Heart right ventricle (tissue), 16 donors: ENCODE measurements at regions of chr15 and their contacts with region 1.

Region 1: GRCh38 chr15:29511663-29512062 is 242.0 kb upstream of the NSMCE3 start:
- DNase-seq: no peak
- ATAC-seq: no peak
- H3K4me3 ChIP-seq: no peak overlapping the region
- H3K27ac ChIP-seq: no peak overlapping the region
- H3K4me1 ChIP-seq: peaks cover 0 to 2% (median 0%) of the 10 kb centered on the region in 9 donors
- H3K27me3 ChIP-seq: no peaks in the 10 kb centered on the region
- CTCF ChIP-seq: no peak

Region 2: DNA sequence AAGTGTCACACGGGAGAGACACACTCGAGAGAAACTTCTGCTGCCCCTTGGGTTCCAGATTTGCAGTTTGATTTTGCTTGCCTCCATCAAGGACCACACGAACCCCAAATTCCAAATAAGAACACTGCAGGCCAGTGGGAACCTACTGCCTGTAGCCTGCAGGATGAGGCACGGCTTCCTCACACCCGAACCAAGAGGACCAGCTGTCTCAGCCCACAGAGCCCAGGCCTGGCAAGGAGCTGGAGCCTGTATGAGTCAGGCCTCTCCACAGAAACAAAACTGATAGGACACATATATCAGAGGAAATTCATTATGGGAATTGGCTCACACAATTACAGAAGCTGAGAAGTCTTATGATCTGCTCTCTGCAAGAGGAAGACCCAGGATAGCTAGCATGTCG is 53.9 kb before region 1 on chr15:
- intact Hi-C with region 1: loop called in 1 of 10 experiments (anchors 5 kb)
- DNase-seq: no peak
- ATAC-seq: no peak
- H3K4me3 ChIP-seq: no peak overlapping the region
- H3K27ac ChIP-seq: no peak overlapping the region
- H3K4me1 ChIP-seq: peaks cover 0 to 11% (median 0%) of the 10 kb centered on the region in 9 donors
- H3K27me3 ChIP-seq: no peaks in the 10 kb centered on the region
- CTCF ChIP-seq: no peak

Region 3: DNA sequence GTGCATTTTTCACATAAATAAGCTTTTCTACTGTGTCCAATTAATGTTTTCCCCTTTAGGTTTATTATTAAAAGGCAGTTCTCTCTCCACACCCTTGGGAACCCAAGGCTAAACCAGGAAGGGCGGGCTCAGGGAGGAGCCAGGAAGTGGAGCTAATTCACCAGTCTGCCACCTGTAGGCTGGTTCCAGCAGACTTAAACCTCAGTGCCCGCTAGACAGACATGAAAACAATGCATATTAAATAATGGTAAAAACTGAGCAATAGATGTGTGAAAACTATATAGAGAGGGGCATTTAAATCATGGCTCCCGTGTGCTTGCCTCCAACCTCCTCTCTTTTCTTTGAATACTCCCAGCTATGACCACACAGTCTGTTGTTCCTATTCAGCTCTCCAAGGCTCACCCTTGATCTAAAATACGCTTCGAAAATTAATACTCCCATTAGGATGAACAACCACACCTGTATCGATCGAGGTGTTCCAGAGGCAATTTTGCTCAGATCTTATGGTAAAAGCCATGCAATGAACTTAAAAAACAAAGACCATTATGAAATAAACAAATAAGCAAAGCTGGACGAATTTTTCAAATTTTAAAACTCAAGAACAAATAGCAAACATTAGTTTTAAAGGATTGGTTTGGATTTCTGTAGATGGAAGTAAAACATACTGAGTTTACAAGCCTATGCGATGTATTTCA is 57.3 kb after region 1 on chr15:
- intact Hi-C with region 1: no loop called
- DNase-seq: no peak
- ATAC-seq: peak in 1 of 8 donors; percentile 65
- H3K4me3 ChIP-seq: no peak overlapping the region
- H3K27ac ChIP-seq: no peak overlapping the region
- H3K4me1 ChIP-seq: peaks cover 0 to 29% (median 12%) of the 10 kb centered on the region in 9 donors
- H3K27me3 ChIP-seq: peaks cover 15 to 93% (median 71%) of the 10 kb centered on the region in 7 donors
- CTCF ChIP-seq: peak in 5 of 9 donors; percentile 15 to 41 (median 32)